Natural killer cell (primary cell): ENCODE measurements at regions of chr1 and their contacts with region 1.

Region 1: GRCh38 chr1:206808615-206809014 is 36.3 kb upstream of the IL10 start:
- DNase-seq: peak in 1 of 2 donors; percentile 85
- ATAC-seq: peak; percentile 73 to 89 (median 86)
- H3K4me3 ChIP-seq: no peak overlapping the region
- H3K4me3 Mint-ChIP-seq: no peak overlapping the region
- H3K27ac ChIP-seq: no peak overlapping the region
- H3K27ac Mint-ChIP-seq: no peak overlapping the region
- H3K4me1 ChIP-seq: peaks cover 6% of the 10 kb centered on the region
- H3K4me1 Mint-ChIP-seq: peaks cover 0 to 12% of the 10 kb centered on the region in 2 donors
- H3K27me3 ChIP-seq: no peaks in the 10 kb centered on the region
- H3K27me3 Mint-ChIP-seq: peaks cover 8 to 26% of the 10 kb centered on the region in 2 donors
- CTCF ChIP-seq: peak; percentile 42

Region 2: DNA sequence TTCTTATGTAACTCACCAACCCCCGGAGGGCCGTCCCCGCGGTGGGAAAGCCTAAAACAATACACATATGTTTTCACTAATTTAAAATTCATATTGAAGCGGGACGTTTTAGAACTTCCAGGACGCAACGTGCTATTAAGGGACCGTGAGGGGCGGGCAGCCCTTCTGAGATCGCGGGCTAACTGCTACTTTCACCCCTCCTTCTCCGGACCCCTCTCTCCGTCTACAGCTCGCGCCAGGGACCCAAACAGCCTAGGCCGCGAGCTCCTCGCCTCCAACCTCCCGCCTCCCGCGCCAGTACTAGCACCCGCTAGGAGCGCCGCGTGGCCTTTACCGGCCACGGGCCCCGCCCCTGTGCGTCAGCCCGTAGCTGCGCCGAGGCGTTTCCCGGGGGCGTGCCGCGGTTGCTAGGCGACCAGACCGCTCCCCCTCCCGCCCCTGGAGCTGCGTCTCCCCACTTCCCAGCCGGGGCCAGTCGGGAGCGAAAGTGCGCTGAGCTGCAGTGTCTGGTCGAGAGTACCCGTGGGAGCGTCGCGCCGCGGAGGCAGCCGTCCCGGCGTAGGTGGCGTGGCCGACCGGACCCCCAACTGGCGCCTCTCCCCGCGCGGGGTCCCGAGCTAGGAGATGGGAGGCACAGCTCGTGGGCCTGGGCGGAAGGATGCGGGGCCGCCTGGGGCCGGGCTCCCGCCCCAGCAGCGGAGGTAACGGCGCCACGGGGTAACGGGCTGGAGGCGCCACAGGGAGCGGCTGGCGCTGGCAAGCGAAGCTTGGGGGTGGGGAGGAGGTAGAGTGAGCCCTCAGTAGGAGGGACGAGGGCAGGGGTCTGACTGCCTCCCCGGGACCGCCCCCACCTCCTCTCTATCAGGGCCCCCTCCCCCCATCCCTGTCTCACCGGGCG is 173.3 kb before region 1 on chr1 and contains the start of gene DYRK3:
- intact Hi-C with region 1: loop called (anchors 10 kb)
- DNase-seq: peak; percentile 78 to 94
- ATAC-seq: peak; percentile 94 to 96 (median 95)
- H3K4me3 ChIP-seq: peak within 1 kb of the TSS; percentile 48
- H3K4me3 Mint-ChIP-seq: peak within 1 kb of the TSS; percentile 92
- H3K27ac ChIP-seq: no peak within 1 kb of the TSS
- H3K27ac Mint-ChIP-seq: peak within 1 kb of the TSS; percentile 56 to 79
- H3K4me1 ChIP-seq: peaks cover 17% of the 10 kb centered on the region
- H3K4me1 Mint-ChIP-seq: peaks cover 10 to 21% of the 10 kb centered on the region in 2 donors
- H3K27me3 ChIP-seq: peaks cover 8% of the 10 kb centered on the region
- H3K27me3 Mint-ChIP-seq: peaks cover 20 to 31% of the 10 kb centered on the region in 2 donors
- CTCF ChIP-seq: no peak
- total RNA-seq, gene DYRK3: 0.16 to 0.66 (median 0.43) TPM

Region 3: DNA sequence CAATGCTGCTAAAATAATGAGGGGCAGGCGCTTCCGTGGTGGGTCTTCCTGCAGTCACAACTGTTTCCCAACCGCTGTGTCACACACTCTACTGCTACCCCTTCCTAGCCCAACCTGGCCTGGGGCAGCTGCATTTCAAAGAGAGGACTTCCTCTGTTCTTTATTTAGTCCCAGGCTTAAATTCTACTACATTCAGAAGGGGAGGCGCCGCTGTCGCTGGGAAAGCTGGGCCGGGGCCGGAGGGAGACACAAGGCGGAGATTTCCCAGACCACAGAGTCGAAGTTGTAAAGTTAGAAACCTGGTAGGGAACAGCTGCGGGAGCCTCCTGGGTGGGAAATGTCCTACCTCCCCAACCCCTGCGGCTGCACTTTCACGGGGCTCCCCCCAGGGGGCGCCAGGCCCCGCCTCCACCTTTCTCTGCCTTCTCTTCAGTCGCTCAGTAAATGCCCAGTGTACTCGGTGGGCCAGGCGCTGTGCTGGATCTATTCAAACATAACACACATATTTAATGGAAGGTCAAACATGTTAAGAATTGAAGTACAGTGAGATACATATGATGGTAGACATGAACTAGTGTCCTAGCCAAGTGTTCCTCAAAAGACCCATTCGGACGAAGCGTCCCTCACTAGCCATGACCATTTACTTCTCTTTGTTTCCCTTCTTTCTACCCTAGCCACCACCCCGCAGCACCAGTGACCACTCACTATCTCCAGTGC is 150.2 kb before region 1 on chr1:
- intact Hi-C with region 1: loop called (anchors 1 kb)
- DNase-seq: peak; percentile 57 to 72
- ATAC-seq: peak; percentile 86 to 88 (median 88)
- H3K4me3 ChIP-seq: no peak overlapping the region
- H3K4me3 Mint-ChIP-seq: no peak overlapping the region
- H3K27ac ChIP-seq: no peak overlapping the region
- H3K27ac Mint-ChIP-seq: no peak overlapping the region
- H3K4me1 ChIP-seq: peaks cover 7% of the 10 kb centered on the region
- H3K4me1 Mint-ChIP-seq: peaks cover 7 to 9% of the 10 kb centered on the region in 2 donors
- H3K27me3 ChIP-seq: peaks cover 5% of the 10 kb centered on the region
- H3K27me3 Mint-ChIP-seq: peaks cover 25 to 37% of the 10 kb centered on the region in 2 donors
- CTCF ChIP-seq: peak; percentile 94

Region 4: DNA sequence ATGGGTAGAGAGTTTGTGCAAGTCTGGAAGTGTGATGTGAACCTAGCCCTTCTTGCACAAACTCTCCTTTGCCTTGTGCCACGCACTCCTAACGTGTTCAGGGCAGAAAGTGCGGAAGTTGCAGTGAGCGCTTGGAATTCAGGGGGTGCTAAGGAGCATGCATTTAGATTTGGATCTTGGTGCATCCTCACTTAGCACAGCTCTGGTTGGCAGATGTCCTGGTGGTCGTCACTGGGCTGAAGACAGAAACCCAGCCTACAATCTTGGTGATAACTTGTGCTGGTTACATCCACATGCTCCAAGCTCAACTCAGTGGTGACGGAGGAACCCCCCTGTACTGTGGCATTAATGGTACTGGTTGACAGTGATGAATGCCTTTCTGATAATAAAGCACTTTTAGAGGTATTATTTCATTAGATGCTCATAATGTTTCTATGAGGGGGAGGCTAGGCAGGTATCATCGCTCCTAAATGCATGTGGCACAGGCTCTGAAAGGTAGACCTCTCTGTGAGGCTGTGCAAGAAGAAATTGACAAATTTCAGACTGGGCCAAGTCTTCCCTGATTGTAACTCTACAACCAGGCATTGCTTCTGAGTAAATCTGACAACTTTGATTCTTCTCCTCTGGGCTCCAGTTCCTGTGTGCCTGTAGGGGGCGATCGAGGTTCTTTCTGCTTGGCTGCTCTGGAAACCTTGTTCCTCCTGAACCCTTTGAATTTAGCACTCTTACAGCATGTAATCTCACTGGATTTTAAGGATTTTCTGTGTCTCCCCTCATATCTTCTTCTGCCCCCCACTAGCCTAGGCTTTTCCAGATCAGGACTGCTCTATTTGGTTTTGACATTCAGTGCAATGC is 83.3 kb before region 1 on chr1:
- intact Hi-C with region 1: loop called (anchors 1 kb)
- DNase-seq: peak; percentile 55 to 82
- ATAC-seq: peak; percentile 36 to 54 (median 54)
- H3K4me3 ChIP-seq: no peak overlapping the region
- H3K4me3 Mint-ChIP-seq: no peak overlapping the region
- H3K27ac ChIP-seq: no peak overlapping the region
- H3K27ac Mint-ChIP-seq: no peak overlapping the region
- H3K4me1 ChIP-seq: peaks cover 67% of the 10 kb centered on the region
- H3K4me1 Mint-ChIP-seq: peaks cover 63 to 83% of the 10 kb centered on the region in 2 donors
- H3K27me3 ChIP-seq: no peaks in the 10 kb centered on the region
- H3K27me3 Mint-ChIP-seq: no peaks in the 10 kb centered on the region
- CTCF ChIP-seq: peak; percentile 55

Region 5: DNA sequence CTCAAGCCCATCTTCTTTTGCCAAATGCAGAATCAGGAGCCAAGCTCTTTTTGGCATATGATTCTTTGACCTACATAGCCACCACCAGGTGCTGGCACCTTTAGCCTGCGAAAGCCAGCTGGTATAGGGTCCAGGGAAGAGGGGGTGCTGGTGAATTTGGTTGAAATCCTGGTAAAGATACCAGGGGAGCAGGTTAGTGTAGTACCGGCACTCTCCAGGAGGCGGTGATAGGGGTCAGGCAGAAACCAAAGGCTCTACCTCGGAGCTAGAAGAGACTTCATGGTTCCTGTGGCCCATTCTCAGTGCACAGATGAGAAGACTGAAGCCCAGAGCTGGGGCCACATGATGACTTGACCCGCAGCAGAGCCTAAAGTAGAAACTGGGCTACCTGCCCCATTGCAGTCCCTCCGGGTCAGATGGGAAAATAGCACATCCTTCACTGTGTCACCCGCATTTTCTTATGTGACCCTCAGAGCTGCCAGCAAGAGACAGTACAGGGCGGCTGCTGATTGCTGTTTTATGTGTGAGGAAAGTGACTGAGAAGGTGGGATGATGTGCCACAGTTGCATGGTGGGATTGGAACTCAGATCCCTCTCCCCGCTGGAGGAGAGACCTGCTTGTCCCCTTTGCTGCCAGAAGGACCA is 74.0 kb before region 1 on chr1:
- intact Hi-C with region 1: loop called (anchors 1 kb)
- DNase-seq: peak; percentile 74 to 90
- ATAC-seq: peak; percentile 49 to 63 (median 63)
- H3K4me3 ChIP-seq: no peak overlapping the region
- H3K4me3 Mint-ChIP-seq: peak overlapping the region; percentile 17
- H3K27ac ChIP-seq: no peak overlapping the region
- H3K27ac Mint-ChIP-seq: peak overlapping the region; percentile 66 to 92
- H3K4me1 ChIP-seq: peaks cover 66% of the 10 kb centered on the region
- H3K4me1 Mint-ChIP-seq: peaks cover 63 to 68% of the 10 kb centered on the region in 2 donors
- H3K27me3 ChIP-seq: no peaks in the 10 kb centered on the region
- H3K27me3 Mint-ChIP-seq: no peaks in the 10 kb centered on the region
- CTCF ChIP-seq: peak; percentile 84

Region 6: GRCh38 chr1:206797534-206798383 is 10.9 kb before region 1 on chr1:
- intact Hi-C with region 1: no loop called
- DNase-seq: peak; percentile 23 to 72
- ATAC-seq: peak in 2 of 3 donors; percentile 72 to 79
- H3K4me3 ChIP-seq: no peak overlapping the region
- H3K4me3 Mint-ChIP-seq: no peak overlapping the region
- H3K27ac ChIP-seq: no peak overlapping the region
- H3K27ac Mint-ChIP-seq: no peak overlapping the region
- H3K4me1 ChIP-seq: peaks cover 16% of the 10 kb centered on the region
- H3K4me1 Mint-ChIP-seq: peaks cover 6 to 12% of the 10 kb centered on the region in 2 donors
- H3K27me3 ChIP-seq: no peaks in the 10 kb centered on the region
- H3K27me3 Mint-ChIP-seq: peaks cover 27 to 56% of the 10 kb centered on the region in 2 donors
- CTCF ChIP-seq: peak; percentile 65

Region 7: DNA sequence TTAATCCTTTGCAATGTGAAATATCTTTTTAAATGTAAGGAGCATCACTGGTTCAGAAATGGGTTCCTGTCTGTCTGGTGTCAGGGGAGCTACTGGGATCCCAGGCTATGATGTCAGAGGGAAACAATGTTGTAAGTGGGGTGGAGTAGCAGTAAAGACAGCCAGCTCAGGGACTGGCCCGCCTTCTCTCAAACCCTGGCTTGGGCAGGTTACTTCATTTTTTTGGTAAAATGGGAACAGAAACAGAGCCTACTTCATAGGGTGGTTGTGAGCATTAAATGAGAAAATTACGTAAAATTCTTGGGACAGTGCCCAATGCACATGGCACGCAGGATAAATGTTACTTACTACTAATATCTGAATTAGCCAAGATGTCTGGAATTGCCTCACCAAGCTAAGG is 26.1 kb after region 1 on chr1:
- intact Hi-C with region 1: no loop called
- DNase-seq: no peak
- ATAC-seq: no peak
- H3K4me3 ChIP-seq: no peak overlapping the region
- H3K4me3 Mint-ChIP-seq: no peak overlapping the region
- H3K27ac ChIP-seq: no peak overlapping the region
- H3K27ac Mint-ChIP-seq: no peak overlapping the region
- H3K4me1 ChIP-seq: peaks cover 39% of the 10 kb centered on the region
- H3K4me1 Mint-ChIP-seq: peaks cover 19 to 20% of the 10 kb centered on the region in 2 donors
- H3K27me3 ChIP-seq: no peaks in the 10 kb centered on the region
- H3K27me3 Mint-ChIP-seq: peaks cover 0 to 10% of the 10 kb centered on the region in 2 donors
- CTCF ChIP-seq: no peak